T-cell (primary cell): ENCODE measurements at regions of chr17 and their contacts with region 1.

Region 1: DNA sequence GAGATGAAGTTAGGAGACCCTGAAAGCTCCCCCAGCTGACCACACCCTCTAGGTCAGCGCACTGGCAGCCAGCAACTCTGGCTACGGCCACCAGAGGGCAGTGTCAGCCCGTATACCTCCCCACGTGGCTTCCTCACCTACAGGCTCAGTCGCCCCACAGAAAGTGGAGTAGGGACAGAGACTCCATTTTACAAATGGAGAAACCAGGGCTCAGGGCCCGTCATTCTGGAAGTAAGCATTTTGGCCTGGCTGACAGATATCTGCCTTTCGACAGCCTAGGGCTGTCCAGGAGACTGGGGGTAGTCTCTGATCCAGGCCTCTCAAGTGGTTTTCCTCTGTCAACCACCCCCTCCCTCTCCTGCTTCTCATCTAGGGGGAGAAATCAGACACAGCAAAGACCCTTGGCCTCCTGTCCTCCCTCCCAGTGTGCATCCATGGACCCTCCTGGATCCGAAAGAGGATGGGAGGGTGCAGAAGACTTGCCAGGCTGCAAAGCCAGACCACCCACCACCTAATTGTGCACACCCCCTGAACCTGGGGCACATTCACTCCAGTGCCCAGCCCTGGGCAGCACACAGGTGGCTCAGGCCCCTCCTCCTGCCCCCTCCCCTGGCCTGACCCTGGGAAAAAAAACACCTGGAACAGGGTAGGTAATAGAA is 3.8 kb upstream of the HAP1 start:
- DNase-seq: peak; percentile 38 to 89 (median 69)
- ATAC-seq: peak; percentile 83 to 94 (median 90)
- H3K4me3 ChIP-seq: no peak overlapping the region
- H3K4me3 Mint-ChIP-seq: no peak overlapping the region
- H3K27ac ChIP-seq: no peak overlapping the region
- H3K27ac Mint-ChIP-seq: no peak overlapping the region
- H3K4me1 ChIP-seq: peaks cover 2 to 25% of the 10 kb centered on the region in 2 experiments
- H3K4me1 Mint-ChIP-seq: peaks cover 0 to 12% (median 4%) of the 10 kb centered on the region in 3 donors
- H3K27me3 ChIP-seq: peaks cover 0 to 48% of the 10 kb centered on the region in 2 experiments
- H3K27me3 Mint-ChIP-seq: peaks cover 29 to 39% of the 10 kb centered on the region in 2 donors

Region 2: GRCh38 chr17:41910701-41911391 is 172.6 kb after region 1 on chr17:
- CTCF ChIA-PET with region 1: no interaction called
- POLR2A ChIA-PET with region 1: no interaction called
- DNase-seq: no peak
- ATAC-seq: no peak
- H3K4me3 ChIP-seq: no peak overlapping the region
- H3K4me3 Mint-ChIP-seq: no peak overlapping the region
- H3K27ac ChIP-seq: no peak overlapping the region
- H3K27ac Mint-ChIP-seq: no peak overlapping the region
- H3K4me1 ChIP-seq: peaks cover 0 to 20% of the 10 kb centered on the region in 2 experiments
- H3K4me1 Mint-ChIP-seq: peaks cover 20 to 26% (median 21%) of the 10 kb centered on the region in 3 donors
- H3K27me3 ChIP-seq: no peaks in the 10 kb centered on the region
- H3K27me3 Mint-ChIP-seq: no peaks in the 10 kb centered on the region

Region 3: GRCh38 chr17:41925991-41926590 is 187.9 kb after region 1 on chr17:
- CTCF ChIA-PET with region 1: no interaction called
- POLR2A ChIA-PET with region 1: no interaction called
- DNase-seq: no peak
- ATAC-seq: no peak
- H3K4me3 ChIP-seq: no peak overlapping the region
- H3K4me3 Mint-ChIP-seq: no peak overlapping the region
- H3K27ac ChIP-seq: no peak overlapping the region
- H3K27ac Mint-ChIP-seq: no peak overlapping the region
- H3K4me1 ChIP-seq: peaks cover 7 to 17% of the 10 kb centered on the region in 2 experiments
- H3K4me1 Mint-ChIP-seq: peaks cover 20 to 21% (median 20%) of the 10 kb centered on the region in 3 donors
- H3K27me3 ChIP-seq: no peaks in the 10 kb centered on the region
- H3K27me3 Mint-ChIP-seq: no peaks in the 10 kb centered on the region

Region 4: DNA sequence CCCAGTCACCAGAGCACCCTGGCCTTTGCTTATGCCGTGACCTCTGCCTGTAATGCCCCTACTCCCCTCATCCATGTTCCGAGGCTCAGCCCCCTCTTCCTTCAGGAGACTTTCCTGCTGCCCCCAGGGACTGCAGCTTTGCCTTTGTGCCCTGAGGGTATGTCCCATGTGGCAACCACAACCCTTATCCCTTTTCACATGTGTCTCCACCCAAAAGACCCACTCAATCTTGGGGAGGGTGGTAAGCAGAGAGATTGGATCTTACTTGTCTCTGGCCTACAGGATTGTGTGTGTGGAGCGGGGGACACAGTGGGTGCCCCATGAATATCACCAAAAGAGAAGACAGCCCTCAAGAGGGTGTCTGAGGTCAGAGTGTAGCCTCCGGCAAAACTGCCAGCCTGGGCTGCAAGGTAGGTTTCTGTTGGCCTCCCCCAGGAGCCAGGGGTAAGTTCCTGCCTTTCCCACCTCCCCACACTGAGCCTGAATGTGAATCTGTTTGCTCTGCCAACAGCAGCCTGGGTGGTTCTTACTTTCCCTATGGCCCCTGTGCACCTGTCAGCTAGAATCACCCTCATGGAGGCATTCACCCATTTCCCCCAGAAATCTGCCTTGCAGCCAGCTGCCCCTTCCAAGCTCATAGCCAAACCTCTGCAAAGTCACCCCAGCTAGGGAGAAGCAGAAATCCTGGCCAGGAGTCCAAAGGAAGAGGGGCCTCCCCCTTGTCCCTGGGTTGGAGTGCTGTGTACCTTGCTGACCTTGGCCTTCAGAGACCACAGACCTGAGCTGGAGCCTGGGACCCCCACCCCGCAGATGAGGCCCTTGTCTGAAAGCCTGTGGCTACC is 323.7 kb after region 1 on chr17:
- CTCF ChIA-PET with region 1: interaction called in 1 of 2 experiments, 10 read pairs
- POLR2A ChIA-PET with region 1: no interaction called
- DNase-seq: no peak
- ATAC-seq: no peak
- H3K4me3 ChIP-seq: no peak overlapping the region
- H3K4me3 Mint-ChIP-seq: no peak overlapping the region
- H3K27ac ChIP-seq: no peak overlapping the region
- H3K27ac Mint-ChIP-seq: no peak overlapping the region
- H3K4me1 ChIP-seq: peaks cover 13 to 29% of the 10 kb centered on the region in 2 experiments
- H3K4me1 Mint-ChIP-seq: peaks cover 19 to 36% (median 22%) of the 10 kb centered on the region in 3 donors
- H3K27me3 ChIP-seq: peaks cover 0 to 35% of the 10 kb centered on the region in 2 experiments
- H3K27me3 Mint-ChIP-seq: peaks cover 0 to 12% of the 10 kb centered on the region in 2 donors